PC-9 (cell line): ENCODE measurements at regions of chr3 and their contacts with region 1.

Region 1: DNA sequence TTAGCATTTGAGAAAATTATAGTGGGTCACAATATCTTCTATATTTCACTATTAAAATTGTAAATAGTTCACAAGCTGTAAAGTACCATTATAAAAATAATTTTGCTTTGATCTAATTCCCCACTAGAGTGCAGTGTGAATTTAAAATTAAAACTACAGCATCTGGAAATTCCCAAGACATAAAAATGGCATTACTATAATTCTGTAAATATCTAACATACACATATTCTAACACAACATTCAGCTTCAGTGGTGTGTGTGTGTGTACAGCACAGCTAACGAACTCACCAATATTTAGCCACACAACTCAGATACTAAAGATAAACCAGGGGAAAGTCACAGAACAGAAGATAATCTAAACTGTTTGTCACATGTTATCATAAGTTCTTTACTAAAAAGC is 424.9 kb upstream of the ZNF385D start:
- DNase-seq: no peak
- H3K4me3 ChIP-seq: no peak overlapping the region
- H3K27ac ChIP-seq: no peak overlapping the region
- H3K4me1 ChIP-seq: no peaks in the 10 kb centered on the region
- H3K27me3 ChIP-seq: no peaks in the 10 kb centered on the region
- CTCF ChIP-seq: peak; percentile 49

Region 2: DNA sequence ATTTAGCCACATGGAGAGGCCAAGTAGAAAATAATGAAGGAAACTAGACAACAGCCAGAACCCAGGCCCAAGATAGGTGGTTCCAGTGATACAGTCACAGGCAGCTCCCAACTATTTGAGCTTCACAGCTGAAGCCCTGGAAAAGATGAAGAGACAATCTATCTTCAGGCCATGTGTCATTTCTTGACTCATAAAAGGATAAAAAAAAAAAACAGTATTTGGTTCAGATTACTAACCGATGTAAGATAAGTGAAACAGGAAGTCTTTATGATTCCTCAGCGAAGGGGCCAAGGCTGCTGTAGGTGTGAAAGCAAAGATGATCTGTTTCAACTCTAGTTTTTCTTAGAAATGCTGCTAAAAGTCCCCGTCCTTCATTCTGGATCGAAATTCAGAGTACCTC is 819.5 kb before region 1 on chr3:
- CTCF ChIA-PET with region 1: no interaction called
- POLR2A ChIA-PET with region 1: interaction called, 14 read pairs
- intact Hi-C with region 1: no loop called
- DNase-seq: no peak
- H3K4me3 ChIP-seq: no peak overlapping the region
- H3K27ac ChIP-seq: no peak overlapping the region
- H3K4me1 ChIP-seq: no peaks in the 10 kb centered on the region
- H3K27me3 ChIP-seq: no peaks in the 10 kb centered on the region
- CTCF ChIP-seq: no peak

Region 3: DNA sequence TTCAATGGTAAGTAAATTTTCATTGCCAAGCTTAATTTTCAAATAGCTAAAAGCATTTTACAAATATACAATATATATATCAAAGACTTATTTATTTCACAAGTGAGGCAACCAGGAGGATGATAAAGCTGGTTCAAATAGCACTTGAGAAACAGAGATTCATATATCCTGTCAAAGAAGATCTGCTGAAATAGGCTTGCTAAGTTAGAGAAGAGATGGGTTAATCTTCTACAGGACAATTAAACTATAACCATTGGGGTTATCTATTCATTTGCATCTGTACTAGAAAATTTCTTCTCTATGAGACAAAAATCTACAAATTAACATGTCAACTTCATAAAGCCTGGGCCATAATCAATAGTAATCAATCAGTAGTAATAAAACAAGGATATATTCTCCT is 389.4 kb after region 1 on chr3:
- CTCF ChIA-PET with region 1: no interaction called
- POLR2A ChIA-PET with region 1: no interaction called
- intact Hi-C with region 1: loop called (anchors 10 kb)
- DNase-seq: no peak
- H3K4me3 ChIP-seq: no peak overlapping the region
- H3K27ac ChIP-seq: no peak overlapping the region
- H3K4me1 ChIP-seq: no peaks in the 10 kb centered on the region
- H3K27me3 ChIP-seq: no peaks in the 10 kb centered on the region
- CTCF ChIP-seq: no peak

Region 4: DNA sequence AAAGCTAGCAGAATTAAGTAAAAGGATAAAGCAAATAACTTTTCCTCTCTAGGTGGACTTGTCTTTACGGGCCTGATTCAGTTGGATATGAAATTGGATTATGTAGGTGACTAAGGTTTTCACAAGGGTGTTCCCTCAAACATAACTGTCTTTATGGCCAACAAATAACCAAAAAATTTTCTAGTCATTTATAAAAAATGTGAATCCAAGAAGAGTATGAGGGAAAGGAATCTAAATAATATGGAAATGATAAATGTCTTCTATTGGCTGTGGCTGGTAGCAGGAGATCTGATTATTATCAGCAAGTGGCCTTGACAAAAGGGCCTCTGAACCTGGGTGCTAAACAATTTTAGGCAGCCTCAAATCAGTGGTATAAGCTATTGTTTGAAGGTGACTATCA is 433.2 kb after region 1 on chr3:
- CTCF ChIA-PET with region 1: no interaction called
- POLR2A ChIA-PET with region 1: no interaction called
- intact Hi-C with region 1: no loop called
- DNase-seq: no peak
- H3K4me3 ChIP-seq: no peak overlapping the region
- H3K27ac ChIP-seq: no peak overlapping the region
- H3K4me1 ChIP-seq: no peaks in the 10 kb centered on the region
- H3K27me3 ChIP-seq: no peaks in the 10 kb centered on the region
- CTCF ChIP-seq: no peak